ENCODE measurements at regions of chr4 and their contacts with region 1.

Region 1: DNA sequence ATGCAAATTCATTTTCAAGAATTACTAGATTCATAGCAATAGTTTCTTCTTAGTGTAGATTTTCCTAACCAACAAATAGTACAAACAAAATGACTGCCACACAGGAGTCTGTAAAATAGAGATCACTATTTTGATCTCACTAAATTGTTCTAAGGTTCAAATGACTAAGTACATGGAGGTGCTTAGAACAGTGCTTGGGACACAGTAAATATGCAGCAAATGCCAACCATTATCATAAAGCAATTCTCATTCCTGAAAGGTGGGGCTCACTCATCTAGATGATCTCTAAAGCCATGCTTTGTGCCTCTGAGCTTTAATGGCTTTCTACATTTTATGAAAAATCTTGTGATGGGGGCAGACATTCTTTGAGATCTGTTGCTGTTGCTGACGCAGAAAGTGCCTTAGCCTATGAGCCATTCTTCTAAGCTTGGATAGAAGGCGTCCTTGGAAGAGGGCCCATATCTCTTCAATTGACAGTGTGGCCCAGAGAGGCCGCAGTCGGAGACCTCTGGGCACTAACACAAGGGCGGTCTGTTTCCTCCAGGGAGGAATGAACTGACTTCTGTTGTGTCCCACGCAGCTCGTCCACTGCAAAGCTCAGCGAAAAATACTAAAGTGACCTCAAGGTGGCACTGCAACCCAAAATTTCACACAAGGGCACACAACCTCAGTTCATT is 23.5 kb downstream of the TLR10 start:
- DNase-seq: peak; percentile 44
- H3K4me3 ChIP-seq: no peak overlapping the region
- H3K27ac ChIP-seq: no peak overlapping the region
- H3K4me1 ChIP-seq: no peaks in the 10 kb centered on the region
- H3K27me3 ChIP-seq: no peaks in the 10 kb centered on the region
- CTCF ChIP-seq: peak; percentile 24 to 69 (median 66)
- POLR2A ChIP-seq: no peak

Region 2: GRCh38 chr4:38782452-38783108 is 23.3 kb after region 1 on chr4 and contains the start of gene TLR10:
- intact Hi-C with region 1: loop called (anchors 2 kb)
- DNase-seq: peak; percentile 40
- H3K4me3 ChIP-seq: no peak within 1 kb of the TSS
- H3K27ac ChIP-seq: no peak within 1 kb of the TSS
- H3K4me1 ChIP-seq: no peaks in the 10 kb centered on the region
- H3K27me3 ChIP-seq: no peaks in the 10 kb centered on the region
- CTCF ChIP-seq: peak; percentile 53 to 76 (median 58)
- POLR2A ChIP-seq: no peak
- total RNA-seq, gene TLR10: 0.14 to 0.68 TPM

Region 3: DNA sequence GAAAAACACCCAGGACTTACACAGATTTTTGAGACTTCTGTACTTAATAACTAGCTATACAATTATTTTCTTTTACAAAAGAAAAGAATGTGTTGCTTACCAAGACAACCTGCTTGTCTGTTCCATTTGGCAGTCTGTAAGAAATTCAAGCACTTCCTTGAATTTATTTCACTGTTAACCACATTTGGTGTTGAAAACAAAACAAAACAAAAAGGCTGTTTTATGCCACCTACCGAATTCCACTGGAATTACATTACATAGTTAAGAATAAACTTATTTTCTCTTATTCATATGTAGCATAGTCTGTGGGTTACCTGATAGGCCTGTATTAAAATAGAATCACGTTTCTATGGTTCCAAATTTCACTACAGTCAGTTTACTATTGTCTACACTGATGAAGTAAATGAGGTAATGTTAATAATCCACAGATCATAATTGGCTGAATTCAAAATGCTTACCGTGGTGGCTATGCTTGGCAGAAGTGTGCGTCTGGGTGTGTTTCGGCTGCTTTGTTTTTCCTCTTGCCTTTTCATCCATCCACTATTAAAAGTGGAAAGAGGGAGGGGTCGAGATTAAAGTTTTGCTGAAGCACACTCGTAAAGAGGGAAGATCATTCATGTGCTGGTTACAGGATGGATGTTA is 45.5 kb after region 1 on chr4 and contains the start of gene TLR1:
- intact Hi-C with region 1: loop called (anchors 5 kb)
- DNase-seq: no peak
- H3K4me3 ChIP-seq: peak within 1 kb of the TSS in 1 of 2 donors; percentile 9
- H3K27ac ChIP-seq: peak within 1 kb of the TSS; percentile 29 to 53
- H3K4me1 ChIP-seq: no peaks in the 10 kb centered on the region
- H3K27me3 ChIP-seq: no peaks in the 10 kb centered on the region
- CTCF ChIP-seq: peak in 3 of 4 experiments; percentile 43 to 79 (median 56)
- POLR2A ChIP-seq: no peak
- total RNA-seq, gene TLR1: 7.4 to 7.8 TPM

Region 4: GRCh38 chr4:38856524-38857337 is 97.5 kb after region 1 on chr4 and contains the start of gene TLR6:
- intact Hi-C with region 1: loop called (anchors 2 kb)
- DNase-seq: peak; percentile 63
- H3K4me3 ChIP-seq: no peak within 1 kb of the TSS
- H3K27ac ChIP-seq: peak within 1 kb of the TSS in 1 of 2 donors; percentile 33
- H3K4me1 ChIP-seq: no peaks in the 10 kb centered on the region
- H3K27me3 ChIP-seq: no peaks in the 10 kb centered on the region
- CTCF ChIP-seq: peak; percentile 52 to 82 (median 67)
- POLR2A ChIP-seq: no peak
- total RNA-seq, gene TLR6: 1.0 to 1.5 TPM